ENCODE measurements at regions of chr17 and their contacts with region 1.

Region 1: DNA sequence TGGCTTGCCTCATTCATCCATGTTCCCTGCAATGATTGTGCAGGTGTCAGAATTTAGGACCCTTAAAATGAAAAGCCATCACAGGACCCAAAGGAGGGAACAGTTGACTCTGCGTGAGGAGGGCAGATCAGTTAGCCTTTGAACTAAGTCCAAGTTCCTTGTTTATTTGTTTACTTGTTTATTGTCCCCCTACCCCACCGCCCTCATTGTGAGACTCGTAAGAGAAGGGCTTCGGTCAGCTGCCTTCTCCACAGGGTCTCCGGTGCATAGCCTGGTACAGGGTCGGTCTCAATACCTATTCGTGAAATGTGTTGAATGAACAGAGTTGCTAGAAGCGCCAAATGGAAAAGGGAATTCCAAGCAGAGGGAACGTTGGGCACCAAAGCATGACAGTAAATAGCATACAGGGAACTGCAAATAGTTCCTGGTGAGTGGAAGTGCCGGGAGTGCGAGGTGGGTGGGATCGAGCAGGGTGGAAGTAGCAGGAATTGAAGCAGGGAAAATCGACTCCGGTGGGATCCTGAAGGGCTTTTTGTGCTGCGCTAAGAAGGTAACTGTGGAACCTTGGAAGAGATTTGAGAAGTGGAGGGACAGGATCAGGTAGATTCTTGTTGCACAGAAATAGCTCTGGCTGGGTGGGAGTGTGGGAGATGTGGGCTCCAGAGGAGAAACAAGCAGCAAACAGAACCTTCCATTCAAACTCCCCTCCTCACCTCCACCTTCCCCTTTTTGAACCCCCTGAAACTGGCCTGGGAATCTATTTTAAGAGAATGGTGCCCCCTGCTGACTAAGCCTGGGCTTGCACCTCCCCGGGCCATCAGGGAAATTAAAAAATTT is 12.7 kb downstream of the SLC35B1 start:
- DNase-seq: peak; percentile 54 to 81 (median 68)
- ATAC-seq: peak; percentile 63
- H3K4me3 ChIP-seq: no peak overlapping the region
- H3K4me3 Mint-ChIP-seq: no peak overlapping the region
- H3K27ac ChIP-seq: no peak overlapping the region
- H3K27ac Mint-ChIP-seq: peak overlapping the region; percentile 91
- H3K4me1 ChIP-seq: peaks cover 32% of the 10 kb centered on the region
- H3K4me1 Mint-ChIP-seq: peaks cover 54% of the 10 kb centered on the region
- H3K27me3 ChIP-seq: no peaks in the 10 kb centered on the region
- H3K27me3 Mint-ChIP-seq: no peaks in the 10 kb centered on the region
- CTCF ChIP-seq: peak; percentile 92

Region 2: DNA sequence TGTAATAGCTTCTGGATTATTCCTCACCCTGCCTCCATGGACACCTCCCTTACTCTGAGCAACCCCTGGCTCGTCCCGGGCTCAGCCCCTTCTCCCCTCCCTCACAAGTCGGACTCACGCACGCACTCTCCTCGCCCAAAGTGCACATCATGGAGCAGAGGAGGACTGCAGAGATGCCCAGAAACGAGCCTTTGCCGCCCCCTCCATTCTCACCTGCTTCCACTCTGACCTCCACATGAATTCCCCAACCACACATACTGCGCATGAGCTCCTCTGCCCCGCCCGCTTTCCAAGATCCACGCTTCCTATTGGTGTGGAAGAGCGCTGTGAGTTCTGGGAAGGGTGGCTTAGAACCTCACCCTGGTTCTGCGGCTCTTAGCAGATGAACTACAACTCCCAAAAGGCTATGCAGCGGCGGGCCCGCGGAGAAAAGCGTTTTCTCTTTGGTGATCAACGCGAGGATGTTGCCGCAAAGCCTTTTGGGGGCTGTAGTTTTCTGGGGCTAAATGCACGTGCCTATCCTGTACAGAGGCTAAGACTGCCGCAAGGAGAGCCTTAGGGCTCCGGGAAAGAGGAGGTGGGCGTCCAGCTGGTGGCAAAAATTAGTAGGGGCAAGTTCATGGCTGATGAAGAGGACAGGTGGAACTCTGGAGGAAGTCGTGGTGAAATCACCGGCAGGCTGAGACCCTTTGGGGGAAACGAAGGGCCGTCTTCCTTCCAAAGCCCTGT is 280.3 kb before region 1 on chr17 and contains the start of gene PHB1:
- CTCF ChIA-PET with region 1: no interaction called
- POLR2A ChIA-PET with region 1: no interaction called
- intact Hi-C with region 1: loop called in 1 of 2 experiments (anchors 5 kb)
- DNase-seq: peak; percentile 88 to 99 (median 92)
- ATAC-seq: peak; percentile 98
- H3K4me3 ChIP-seq: peak within 1 kb of the TSS; percentile 87
- H3K4me3 Mint-ChIP-seq: peak within 1 kb of the TSS; percentile 91
- H3K27ac ChIP-seq: peak within 1 kb of the TSS in 1 of 2 donors; percentile 30
- H3K27ac Mint-ChIP-seq: peak within 1 kb of the TSS; percentile 52
- H3K4me1 ChIP-seq: peaks cover 19% of the 10 kb centered on the region
- H3K4me1 Mint-ChIP-seq: peaks cover 16% of the 10 kb centered on the region
- H3K27me3 ChIP-seq: no peaks in the 10 kb centered on the region
- H3K27me3 Mint-ChIP-seq: no peaks in the 10 kb centered on the region
- CTCF ChIP-seq: no peak
- total RNA-seq, gene PHB1: 24.2 to 31.6 TPM

Region 3: GRCh38 chr17:49496183-49496866 is 198.7 kb before region 1 on chr17:
- CTCF ChIA-PET with region 1: interaction called, 4 read pairs
- POLR2A ChIA-PET with region 1: no interaction called
- intact Hi-C with region 1: loop called in 1 of 2 experiments (anchors 10 kb)
- DNase-seq: peak; percentile 72 to 91 (median 82)
- ATAC-seq: peak; percentile 87
- H3K4me3 ChIP-seq: peak overlapping the region; percentile 57
- H3K4me3 Mint-ChIP-seq: peak overlapping the region; percentile 80
- H3K27ac ChIP-seq: no peak overlapping the region
- H3K27ac Mint-ChIP-seq: no peak overlapping the region
- H3K4me1 ChIP-seq: peaks cover 36% of the 10 kb centered on the region
- H3K4me1 Mint-ChIP-seq: peaks cover 35% of the 10 kb centered on the region
- H3K27me3 ChIP-seq: peaks cover 40 to 50% of the 10 kb centered on the region in 2 experiments
- H3K27me3 Mint-ChIP-seq: peaks cover 54% of the 10 kb centered on the region
- CTCF ChIP-seq: peak; percentile 79

Region 4: DNA sequence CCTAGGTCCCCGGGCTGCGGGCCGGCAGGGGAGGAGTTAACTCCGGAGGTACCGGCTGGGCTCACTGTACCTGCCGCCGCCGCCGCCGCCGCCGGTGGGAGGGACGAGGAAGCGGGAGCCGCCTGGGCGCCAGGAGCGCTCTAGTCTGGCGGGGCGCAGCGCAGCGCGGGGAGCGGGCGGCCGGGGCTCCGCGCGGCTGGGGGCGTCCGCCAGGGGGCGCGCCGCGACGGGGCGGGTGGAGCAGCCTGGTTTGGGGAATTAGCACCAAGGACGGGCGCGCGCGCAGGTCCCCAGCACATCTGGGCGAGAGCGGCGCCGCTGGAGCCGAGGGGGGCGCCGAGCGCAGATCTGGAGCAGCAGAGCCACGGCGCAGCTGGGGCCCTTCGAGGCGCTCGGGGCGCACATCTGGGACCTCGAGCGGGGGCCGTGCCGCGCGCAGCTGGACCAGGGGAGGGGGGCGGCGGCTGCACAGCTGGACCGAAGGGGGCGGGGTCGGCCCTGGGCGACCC is 119.4 kb before region 1 on chr17 and contains the start of gene NXPH3:
- CTCF ChIA-PET with region 1: interaction called, 48 read pairs
- POLR2A ChIA-PET with region 1: interaction called, 14 read pairs
- intact Hi-C with region 1: loop called (anchors 1 kb)
- DNase-seq: peak; percentile 33 to 81 (median 54)
- ATAC-seq: peak; percentile 82
- H3K4me3 ChIP-seq: peak within 1 kb of the TSS; percentile 40
- H3K4me3 Mint-ChIP-seq: peak within 1 kb of the TSS; percentile 65
- H3K27ac ChIP-seq: no peak within 1 kb of the TSS
- H3K27ac Mint-ChIP-seq: no peak within 1 kb of the TSS
- H3K4me1 ChIP-seq: peaks cover 21% of the 10 kb centered on the region
- H3K4me1 Mint-ChIP-seq: peaks cover 4% of the 10 kb centered on the region
- H3K27me3 ChIP-seq: peaks cover 46 to 50% of the 10 kb centered on the region in 2 experiments
- H3K27me3 Mint-ChIP-seq: peaks cover 51% of the 10 kb centered on the region
- CTCF ChIP-seq: no peak
- total RNA-seq, gene NXPH3: not detected

Region 5: GRCh38 chr17:49616601-49617131 is 78.4 kb before region 1 on chr17:
- CTCF ChIA-PET with region 1: no interaction called
- POLR2A ChIA-PET with region 1: no interaction called
- intact Hi-C with region 1: loop called in 1 of 2 experiments (anchors 10 kb)
- DNase-seq: peak in 2 of 14 experiments; percentile 11 to 13
- ATAC-seq: no peak
- H3K4me3 ChIP-seq: no peak overlapping the region
- H3K4me3 Mint-ChIP-seq: no peak overlapping the region
- H3K27ac ChIP-seq: no peak overlapping the region
- H3K27ac Mint-ChIP-seq: peak overlapping the region; percentile 30
- H3K4me1 ChIP-seq: no peaks in the 10 kb centered on the region
- H3K4me1 Mint-ChIP-seq: peaks cover 25% of the 10 kb centered on the region
- H3K27me3 ChIP-seq: no peaks in the 10 kb centered on the region
- H3K27me3 Mint-ChIP-seq: no peaks in the 10 kb centered on the region
- CTCF ChIP-seq: no peak

Region 6: GRCh38 chr17:49634485-49634860 is 60.6 kb before region 1 on chr17:
- CTCF ChIA-PET with region 1: interaction called, 3 read pairs
- POLR2A ChIA-PET with region 1: no interaction called
- intact Hi-C with region 1: loop called in 1 of 2 experiments (anchors 5 kb)
- DNase-seq: no peak
- ATAC-seq: no peak
- H3K4me3 ChIP-seq: no peak overlapping the region
- H3K4me3 Mint-ChIP-seq: no peak overlapping the region
- H3K27ac ChIP-seq: no peak overlapping the region
- H3K27ac Mint-ChIP-seq: peak overlapping the region; percentile 5
- H3K4me1 ChIP-seq: no peaks in the 10 kb centered on the region
- H3K4me1 Mint-ChIP-seq: peaks cover 61% of the 10 kb centered on the region
- H3K27me3 ChIP-seq: no peaks in the 10 kb centered on the region
- H3K27me3 Mint-ChIP-seq: no peaks in the 10 kb centered on the region
- CTCF ChIP-seq: no peak

Region 7: GRCh38 chr17:49851387-49852291 is 156.6 kb after region 1 on chr17:
- CTCF ChIA-PET with region 1: no interaction called
- POLR2A ChIA-PET with region 1: no interaction called
- intact Hi-C with region 1: no loop called
- DNase-seq: peak; percentile 61 to 83 (median 69)
- ATAC-seq: peak; percentile 81
- H3K4me3 ChIP-seq: peak overlapping the region; percentile 82
- H3K4me3 Mint-ChIP-seq: peak overlapping the region; percentile 96
- H3K27ac ChIP-seq: peak overlapping the region; percentile 16 to 69
- H3K27ac Mint-ChIP-seq: peak overlapping the region; percentile 89
- H3K4me1 ChIP-seq: peaks cover 18% of the 10 kb centered on the region
- H3K4me1 Mint-ChIP-seq: peaks cover 22% of the 10 kb centered on the region
- H3K27me3 ChIP-seq: no peaks in the 10 kb centered on the region
- H3K27me3 Mint-ChIP-seq: no peaks in the 10 kb centered on the region
- CTCF ChIP-seq: peak; percentile 78

Region 8: DNA sequence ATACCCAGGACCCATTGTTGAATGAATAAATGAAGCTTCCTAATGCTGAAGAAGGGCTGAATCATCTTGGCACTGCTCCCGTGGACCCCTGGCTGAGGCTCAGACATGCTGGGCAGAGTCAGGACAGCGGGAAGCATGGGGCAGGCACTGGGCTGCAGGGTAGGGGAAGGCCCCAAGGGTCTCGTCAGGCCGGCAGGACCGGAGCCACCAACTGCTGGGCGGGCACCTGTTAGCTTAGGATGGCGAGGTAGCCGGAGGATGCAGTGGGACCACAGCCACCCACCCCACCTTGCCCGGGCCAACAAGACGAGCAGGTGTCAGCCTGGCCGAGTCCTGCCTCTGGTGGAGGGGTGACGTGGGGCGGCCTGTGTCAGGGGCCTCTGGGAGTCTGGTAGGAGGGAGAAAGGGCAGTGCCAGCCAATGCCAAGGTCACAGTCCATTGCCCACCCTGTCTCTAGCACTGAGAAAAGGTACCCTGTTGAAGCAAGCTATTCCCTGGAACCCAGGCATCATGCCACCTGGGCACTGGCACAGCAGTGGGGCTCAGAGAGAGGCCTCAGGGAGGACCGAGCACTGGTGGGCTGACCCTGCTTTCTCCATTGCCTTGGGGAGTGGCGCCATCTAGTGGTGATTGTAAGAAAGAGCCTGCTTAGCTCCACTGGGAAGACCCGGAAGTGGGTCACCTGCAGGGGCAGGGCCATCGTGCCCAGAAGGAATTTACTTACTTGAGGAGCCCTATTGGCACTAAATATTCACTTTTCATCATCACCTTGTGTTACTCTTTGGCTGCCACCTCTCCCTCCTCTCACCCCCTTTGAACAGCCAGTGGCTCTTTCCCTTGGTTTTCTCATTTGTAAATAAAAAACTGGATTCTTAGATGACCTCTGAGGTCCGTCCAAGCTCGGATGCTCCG is 303.0 kb after region 1 on chr17:
- CTCF ChIA-PET with region 1: no interaction called
- POLR2A ChIA-PET with region 1: interaction called, 3 read pairs
- intact Hi-C with region 1: loop called (anchors 10 kb)
- DNase-seq: peak; percentile 68 to 94 (median 78)
- ATAC-seq: peak; percentile 83
- H3K4me3 ChIP-seq: no peak overlapping the region
- H3K4me3 Mint-ChIP-seq: no peak overlapping the region
- H3K27ac ChIP-seq: no peak overlapping the region
- H3K27ac Mint-ChIP-seq: no peak overlapping the region
- H3K4me1 ChIP-seq: peaks cover 44% of the 10 kb centered on the region
- H3K4me1 Mint-ChIP-seq: peaks cover 39% of the 10 kb centered on the region
- H3K27me3 ChIP-seq: peaks cover 71 to 82% of the 10 kb centered on the region in 2 experiments
- H3K27me3 Mint-ChIP-seq: peaks cover 84% of the 10 kb centered on the region
- CTCF ChIP-seq: peak; percentile 94

Region 9: GRCh38 chr17:50169121-50169764 is 474.2 kb after region 1 on chr17:
- CTCF ChIA-PET with region 1: no interaction called
- POLR2A ChIA-PET with region 1: no interaction called
- intact Hi-C with region 1: no loop called
- DNase-seq: peak; percentile 32 to 84 (median 56)
- ATAC-seq: peak; percentile 88
- H3K4me3 ChIP-seq: peak overlapping the region; percentile 26
- H3K4me3 Mint-ChIP-seq: peak overlapping the region; percentile 63
- H3K27ac ChIP-seq: no peak overlapping the region
- H3K27ac Mint-ChIP-seq: peak overlapping the region; percentile 58
- H3K4me1 ChIP-seq: peaks cover 18% of the 10 kb centered on the region
- H3K4me1 Mint-ChIP-seq: peaks cover 12% of the 10 kb centered on the region
- H3K27me3 ChIP-seq: no peaks in the 10 kb centered on the region
- H3K27me3 Mint-ChIP-seq: no peaks in the 10 kb centered on the region
- CTCF ChIP-seq: peak; percentile 30